Esophagus muscularis mucosa (tissue), 4 donors: ENCODE measurements at regions of chr12 and their contacts with region 1.

Region 1: GRCh38 chr12:101773650-101774162 is 34.4 kb upstream of the SYCP3 start:
- DNase-seq: no peak
- H3K4me3 ChIP-seq: no peak overlapping the region
- H3K27ac ChIP-seq: no peak overlapping the region
- H3K4me1 ChIP-seq: peaks cover 0 to 16% (median 13%) of the 10 kb centered on the region in 4 donors
- H3K27me3 ChIP-seq: no peaks in the 10 kb centered on the region
- CTCF ChIP-seq: peak; percentile 96 to 98 (median 97)
- EP300 ChIP-seq: no peak
- POLR2A ChIP-seq: no peak

Region 2: GRCh38 chr12:101839324-101840283 is 65.9 kb after region 1 on chr12:
- intact Hi-C with region 1: loop called (anchors 2 kb)
- DNase-seq: no peak
- H3K4me3 ChIP-seq: no peak overlapping the region
- H3K27ac ChIP-seq: no peak overlapping the region
- H3K4me1 ChIP-seq: peaks cover 0 to 6% (median 3%) of the 10 kb centered on the region in 4 donors
- H3K27me3 ChIP-seq: no peaks in the 10 kb centered on the region
- CTCF ChIP-seq: peak; percentile 83 to 94 (median 85)
- EP300 ChIP-seq: no peak
- POLR2A ChIP-seq: no peak